PC-9 (cell line): ENCODE measurements at regions of chr6 and their contacts with region 1.

Region 1: GRCh38 chr6:30914076-30914853 is at the start of gene VARS2:
- DNase-seq: peak; percentile 78 to 99
- H3K4me3 ChIP-seq: peak within 1 kb of the TSS; percentile 84
- H3K27ac ChIP-seq: peak within 1 kb of the TSS; percentile 46
- H3K4me1 ChIP-seq: peaks cover 17% of the 10 kb centered on the region
- H3K27me3 ChIP-seq: no peaks in the 10 kb centered on the region
- CTCF ChIP-seq: peak; percentile 46
- total RNA-seq, gene VARS2: 59.4 and 60.3 TPM in 2 replicates

Region 2: GRCh38 chr6:30828027-30828960 is 86.0 kb before region 1 on chr6:
- CTCF ChIA-PET with region 1: interaction called, 7 read pairs
- POLR2A ChIA-PET with region 1: no interaction called
- intact Hi-C with region 1: loop called (anchors 1 kb)
- DNase-seq: peak; percentile 85 to 95
- H3K4me3 ChIP-seq: no peak overlapping the region
- H3K27ac ChIP-seq: peak overlapping the region; percentile 82
- H3K4me1 ChIP-seq: peaks cover 34% of the 10 kb centered on the region
- H3K27me3 ChIP-seq: no peaks in the 10 kb centered on the region
- CTCF ChIP-seq: peak; percentile 93

Region 3: GRCh38 chr6:31042806-31043205 is 128.5 kb after region 1 on chr6:
- CTCF ChIA-PET with region 1: interaction called, 5 read pairs
- POLR2A ChIA-PET with region 1: no interaction called
- intact Hi-C with region 1: loop called (anchors 1 kb)
- DNase-seq: peak; percentile 54 to 61
- H3K4me3 ChIP-seq: no peak overlapping the region
- H3K27ac ChIP-seq: no peak overlapping the region
- H3K4me1 ChIP-seq: peaks cover 9% of the 10 kb centered on the region
- H3K27me3 ChIP-seq: no peaks in the 10 kb centered on the region
- CTCF ChIP-seq: peak; percentile 75

Region 4: DNA sequence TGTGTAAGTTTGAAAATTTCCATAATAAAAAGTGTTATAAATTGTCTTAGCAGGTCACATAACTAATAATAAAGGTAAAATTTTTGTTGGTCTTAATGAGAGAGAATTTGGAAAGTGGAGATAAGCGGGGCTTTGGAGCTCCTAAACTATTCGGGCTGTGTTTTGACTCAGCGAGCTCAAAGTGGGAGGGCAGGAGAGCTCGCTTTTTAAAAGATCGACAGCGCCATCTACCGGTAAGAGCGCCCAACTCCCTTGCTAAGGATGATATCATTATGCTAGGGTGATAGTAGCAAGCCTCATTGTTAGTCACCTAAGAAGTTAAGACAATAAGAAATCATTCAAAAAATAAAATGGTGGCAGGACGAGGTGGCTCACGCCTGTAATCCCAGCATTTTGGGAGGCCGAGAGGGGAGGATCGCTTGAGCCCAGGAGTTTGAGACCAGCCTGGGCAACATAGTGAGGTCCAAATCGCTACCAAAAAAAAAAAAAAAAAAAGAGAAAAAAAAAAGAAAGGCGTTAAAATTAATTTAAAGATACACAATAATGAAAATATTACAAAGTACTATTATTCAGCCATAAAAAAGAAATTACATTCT is 173.3 kb after region 1 on chr6:
- CTCF ChIA-PET with region 1: interaction called, 15 read pairs
- POLR2A ChIA-PET with region 1: no interaction called
- intact Hi-C with region 1: loop called (anchors 1 kb)
- DNase-seq: peak; percentile 80 to 89
- H3K4me3 ChIP-seq: no peak overlapping the region
- H3K27ac ChIP-seq: 0 out of 2 replicates have a peak overlapping the region, but pooled peaks have one; percentile 2
- H3K4me1 ChIP-seq: peaks cover 12% of the 10 kb centered on the region
- H3K27me3 ChIP-seq: no peaks in the 10 kb centered on the region
- CTCF ChIP-seq: peak; percentile 90

Region 5: GRCh38 chr6:31197559-31198305 is 283.5 kb after region 1 on chr6:
- CTCF ChIA-PET with region 1: interaction called, 8 read pairs
- POLR2A ChIA-PET with region 1: no interaction called
- intact Hi-C with region 1: loop called (anchors 1 kb)
- DNase-seq: peak; percentile 82 to 88
- H3K4me3 ChIP-seq: peak overlapping the region; percentile 54
- H3K27ac ChIP-seq: peak overlapping the region; percentile 79
- H3K4me1 ChIP-seq: peaks cover 19% of the 10 kb centered on the region
- H3K27me3 ChIP-seq: no peaks in the 10 kb centered on the region
- CTCF ChIP-seq: no peak